Activated CD8-positive, alpha-beta memory T cell treated with anti-CD3 and anti-CD28 coated beads, Interleukin-2, amount 10 ng/mL, durations not matched to agents 7 days and 5 days (primary cell): ENCODE measurements at regions of chr12 and their contacts with region 1.

Region 1: DNA sequence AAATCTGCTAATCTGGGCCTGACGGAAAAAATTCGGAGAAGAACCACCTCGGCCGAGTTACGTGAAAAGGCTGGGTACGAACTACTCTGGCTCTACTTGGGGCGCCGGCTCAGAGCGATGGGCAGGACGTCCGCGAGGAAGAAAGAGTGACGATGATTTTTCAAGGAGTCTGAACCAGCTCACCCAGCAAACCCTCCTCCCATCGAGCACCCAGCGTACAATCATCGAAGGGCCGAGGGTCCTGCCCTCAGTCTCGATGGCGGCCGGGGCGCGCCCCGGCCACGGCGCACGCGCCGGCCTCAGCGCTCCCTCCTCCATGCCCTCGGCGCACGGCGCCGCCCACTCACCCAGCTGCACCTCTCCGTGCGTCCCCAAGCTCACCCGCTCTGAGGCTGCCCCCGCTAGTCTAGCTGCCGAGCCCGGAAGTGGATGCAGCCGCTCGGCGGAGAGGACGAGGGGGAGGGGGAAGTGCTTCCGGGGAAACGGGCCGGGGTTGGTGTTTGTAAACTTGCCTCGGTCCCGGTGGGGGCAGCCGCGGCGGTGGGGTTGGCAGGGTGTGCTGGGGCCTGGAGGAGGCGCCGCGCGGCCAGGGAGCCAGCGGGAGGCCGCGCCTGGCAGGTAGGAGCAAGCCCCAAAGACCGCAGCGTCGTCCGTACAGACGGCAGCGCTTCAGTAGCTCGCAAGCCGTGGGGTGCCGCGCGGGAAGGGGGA is at the starts of genes CSAD and ZNF740:
- DNase-seq: peak; percentile 99
- ATAC-seq: peak; percentile 98
- H3K4me3 Mint-ChIP-seq: peak within 1 kb of the TSS; percentile 85
- H3K27ac Mint-ChIP-seq: peak within 1 kb of the TSS; percentile 98
- H3K4me1 Mint-ChIP-seq: peaks cover 50% of the 10 kb centered on the region
- H3K27me3 Mint-ChIP-seq: no peaks in the 10 kb centered on the region
- total RNA-seq, gene CSAD: 19.6 to 28.1 TPM
- total RNA-seq, gene ZNF740: 35.8 to 47.0 TPM

Region 2: GRCh38 chr12:53133722-53134121 is 46.7 kb before region 1 on chr12:
- CTCF ChIA-PET with region 1: no interaction called
- DNase-seq: no peak
- ATAC-seq: no peak
- H3K4me3 Mint-ChIP-seq: no peak overlapping the region
- H3K27ac Mint-ChIP-seq: no peak overlapping the region
- H3K4me1 Mint-ChIP-seq: no peaks in the 10 kb centered on the region
- H3K27me3 Mint-ChIP-seq: peaks cover 2% of the 10 kb centered on the region

Region 3: DNA sequence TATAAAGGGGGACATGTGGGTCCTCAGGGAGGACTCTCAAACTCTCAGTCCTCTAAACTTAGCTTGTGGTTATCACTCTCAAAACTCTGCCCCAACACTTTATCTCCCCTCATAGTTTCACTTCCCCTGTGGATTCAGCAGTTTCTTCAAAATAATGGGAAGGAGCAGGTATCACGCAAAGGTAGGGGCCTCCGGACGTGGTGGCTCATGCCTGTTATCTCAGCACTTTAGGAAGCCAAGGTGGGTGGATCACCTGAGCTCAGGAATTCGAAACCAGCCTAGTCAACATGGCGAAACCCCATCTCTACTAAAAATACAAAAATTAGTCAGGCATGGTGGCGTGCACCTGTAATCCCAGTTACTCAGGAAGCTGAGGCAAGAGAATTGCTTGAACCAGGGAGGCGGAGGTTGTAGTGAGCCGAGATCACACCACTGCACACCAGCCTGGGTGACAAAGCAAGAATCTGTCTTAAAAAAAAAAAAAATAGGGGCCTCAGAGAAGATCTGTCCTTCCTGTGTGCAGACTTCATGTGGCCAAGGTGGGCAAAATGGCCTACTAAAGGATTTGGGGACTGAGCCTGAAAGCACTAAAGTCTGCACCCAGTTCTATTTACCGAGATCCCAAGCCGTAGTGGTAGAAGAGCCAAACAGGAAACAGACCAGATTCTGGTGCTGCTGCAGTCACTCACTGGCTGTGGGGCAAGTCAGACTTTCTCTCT is 20.2 kb after region 1 on chr12:
- CTCF ChIA-PET with region 1: interaction called, 19 read pairs
- DNase-seq: peak; percentile 75
- ATAC-seq: peak; percentile 35
- H3K4me3 Mint-ChIP-seq: peak overlapping the region; percentile 76
- H3K27ac Mint-ChIP-seq: peak overlapping the region; percentile 94
- H3K4me1 Mint-ChIP-seq: peaks cover 80% of the 10 kb centered on the region
- H3K27me3 Mint-ChIP-seq: no peaks in the 10 kb centered on the region

Region 4: DNA sequence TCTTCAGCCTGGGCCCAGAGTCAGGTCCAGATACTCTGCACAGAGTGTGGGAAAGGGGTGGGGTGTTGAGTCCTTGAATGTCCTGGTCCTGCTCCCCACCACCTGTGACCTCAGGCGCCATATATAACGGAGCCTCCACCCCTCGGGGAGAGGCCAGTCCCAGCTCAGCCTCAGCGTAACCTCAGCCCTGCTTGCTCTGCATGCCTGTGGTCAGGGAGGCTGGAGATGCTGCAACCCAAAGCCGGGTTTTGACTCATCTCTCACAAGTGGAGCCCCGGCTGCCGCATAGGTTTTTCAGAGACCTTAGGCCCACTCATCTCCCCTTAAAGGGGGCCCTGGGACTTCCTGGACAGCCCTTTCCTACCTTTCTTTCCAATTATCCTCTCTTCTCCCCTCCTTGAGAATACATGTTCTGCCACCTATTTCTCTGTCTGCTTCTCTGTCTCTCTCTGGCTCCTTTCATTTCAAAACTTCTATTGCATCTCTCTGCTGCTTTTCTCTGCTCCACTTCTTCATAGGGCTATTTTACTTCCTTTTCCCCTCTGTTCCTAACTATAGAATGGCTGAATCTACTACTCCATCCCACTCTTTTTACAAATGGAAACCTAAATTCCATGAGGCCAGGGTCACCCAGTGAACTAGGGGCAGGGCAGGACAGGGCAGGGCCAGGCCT is 25.5 kb after region 1 on chr12:
- CTCF ChIA-PET with region 1: interaction called, 13 read pairs
- DNase-seq: peak; percentile 96
- ATAC-seq: peak; percentile 71
- H3K4me3 Mint-ChIP-seq: peak overlapping the region; percentile 91
- H3K27ac Mint-ChIP-seq: peak overlapping the region; percentile 89
- H3K4me1 Mint-ChIP-seq: peaks cover 75% of the 10 kb centered on the region
- H3K27me3 Mint-ChIP-seq: no peaks in the 10 kb centered on the region

Region 5: GRCh38 chr12:53220801-53221202 is 40.4 kb after region 1 on chr12:
- CTCF ChIA-PET with region 1: interaction called, 12 read pairs
- DNase-seq: peak; percentile 92
- ATAC-seq: peak; percentile 71
- H3K4me3 Mint-ChIP-seq: peak overlapping the region; percentile 89
- H3K27ac Mint-ChIP-seq: peak overlapping the region; percentile 98
- H3K4me1 Mint-ChIP-seq: peaks cover 72% of the 10 kb centered on the region
- H3K27me3 Mint-ChIP-seq: no peaks in the 10 kb centered on the region